SK-N-SH (cell line): ENCODE measurements at regions of chr10 and their contacts with region 1.

Region 1: GRCh38 chr10:30581779-30582380 is 47.7 kb downstream of the LYZL2 start:
- DNase-seq: peak; percentile 68
- H3K4me3 ChIP-seq: no peak overlapping the region; a peak in 1 of 4 replicates
- H3K27ac ChIP-seq: no peak overlapping the region
- H3K4me1 ChIP-seq: peaks cover 3 to 4% of the 10 kb centered on the region in 2 experiments; a peak in 2 of 4 replicates
- H3K27me3 ChIP-seq: no peaks in the 10 kb centered on the region
- CTCF ChIP-seq: peak; percentile 89
- EP300 ChIP-seq: no peak
- RAD21 ChIP-seq: peak; percentile 59

Region 2: DNA sequence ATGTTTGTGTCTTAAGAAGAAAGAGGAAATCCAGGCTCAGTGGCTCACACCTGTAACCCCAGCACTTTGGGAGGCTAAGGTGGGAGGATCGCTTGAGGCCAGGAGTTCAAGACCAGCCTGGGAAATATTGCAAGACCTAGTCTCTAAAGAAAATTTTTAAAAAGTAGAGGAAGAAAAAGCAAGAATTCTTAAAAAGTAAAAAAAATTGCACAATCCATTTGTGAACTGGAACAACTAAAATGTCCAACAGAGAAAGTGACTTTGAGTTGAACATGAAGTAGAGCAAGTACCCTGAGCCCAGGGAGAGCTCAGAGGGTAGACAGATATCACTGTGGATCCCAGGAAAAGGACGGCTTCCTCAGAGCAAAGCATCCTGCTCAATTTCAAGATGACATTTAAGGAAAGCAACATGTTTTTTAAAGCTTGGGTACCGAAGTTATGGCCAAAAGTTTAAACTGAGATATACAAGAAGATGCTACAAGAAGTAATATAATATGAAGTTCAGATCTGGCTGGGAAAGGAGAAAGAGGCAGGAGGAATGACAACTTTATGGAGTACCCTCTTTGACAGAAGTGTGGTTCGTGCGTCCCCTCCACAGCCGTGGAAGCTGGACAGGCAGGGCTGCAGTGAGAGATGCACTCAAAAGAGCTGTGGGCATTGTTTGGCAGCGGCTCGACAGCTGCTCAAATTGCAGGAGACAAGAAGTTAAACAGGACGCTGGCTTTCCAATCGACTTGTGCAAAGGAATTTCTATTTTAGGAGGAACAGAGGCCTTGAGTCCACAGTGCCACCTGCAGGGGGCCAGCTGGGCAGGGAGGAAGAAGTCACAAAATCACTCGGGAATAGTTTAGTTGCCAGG is 723.8 kb before region 1 on chr10:
- CTCF ChIA-PET with region 1: no interaction called
- POLR2A ChIA-PET with region 1: no interaction called
- DNase-seq: peak; percentile 31
- H3K4me3 ChIP-seq: 0 out of 4 replicates have a peak overlapping the region, but pooled peaks of 1 of the 2 experiments have one; percentile 1
- H3K27ac ChIP-seq: peak overlapping the region; percentile 67 to 70; a peak in 2 of 4 replicates
- H3K4me1 ChIP-seq: peaks cover 0 to 40% of the 10 kb centered on the region in 2 experiments; a peak in 3 of 4 replicates
- H3K27me3 ChIP-seq: no peaks in the 10 kb centered on the region
- CTCF ChIP-seq: peak; percentile 86
- EP300 ChIP-seq: peak; percentile 33 to 84; a peak in 3 of 4 replicates
- RAD21 ChIP-seq: peak; percentile 75

Region 3: GRCh38 chr10:30324448-30325110 is 257.3 kb before region 1 on chr10:
- CTCF ChIA-PET with region 1: no interaction called
- POLR2A ChIA-PET with region 1: no interaction called
- DNase-seq: no peak
- H3K4me3 ChIP-seq: no peak overlapping the region
- H3K27ac ChIP-seq: no peak overlapping the region
- H3K4me1 ChIP-seq: no peaks in the 10 kb centered on the region
- H3K27me3 ChIP-seq: no peaks in the 10 kb centered on the region
- CTCF ChIP-seq: peak; percentile 20; the same call in 1 of the 2 replicates
- EP300 ChIP-seq: no peak
- RAD21 ChIP-seq: no peak

Region 4: DNA sequence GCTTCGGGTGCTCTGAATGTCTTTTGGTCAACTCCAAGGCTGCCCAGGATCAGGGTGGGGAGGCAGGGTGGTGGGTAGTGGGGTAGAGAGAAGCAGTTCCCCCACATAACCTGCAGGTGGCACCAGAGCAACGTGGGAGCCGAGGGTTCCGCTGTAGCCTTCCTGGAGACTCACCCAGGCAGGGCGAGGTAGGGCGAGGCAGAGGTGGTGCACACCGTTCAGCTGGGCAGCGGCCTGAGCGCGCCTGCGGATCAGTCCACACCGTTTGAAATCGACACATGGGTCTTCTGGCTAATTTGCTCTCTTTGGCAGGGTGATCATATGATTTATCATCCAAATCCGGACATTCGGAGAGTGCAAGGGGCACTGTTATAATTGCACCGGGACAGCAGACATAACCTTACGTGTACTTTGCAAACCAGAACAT is 189.3 kb before region 1 on chr10:
- CTCF ChIA-PET with region 1: interaction called, 17 read pairs
- POLR2A ChIA-PET with region 1: no interaction called
- DNase-seq: peak; percentile 89
- H3K4me3 ChIP-seq: peak overlapping the region; percentile 12 to 16; a peak in 2 of 4 replicates
- H3K27ac ChIP-seq: no peak overlapping the region
- H3K4me1 ChIP-seq: peaks cover 0 to 9% of the 10 kb centered on the region in 2 experiments; a peak in 1 of 4 replicates
- H3K27me3 ChIP-seq: peaks cover 7% of the 10 kb centered on the region; the same call in 1 of the 2 replicates
- CTCF ChIP-seq: peak; percentile 86
- EP300 ChIP-seq: no peak
- RAD21 ChIP-seq: peak; percentile 91